ENCODE measurements at regions of chr13 and their contacts with region 1.

Region 1: GRCh38 chr13:109156181-109156935 is 526.9 kb downstream of the MYO16 start:
- DNase-seq: peak; percentile 48 to 98
- H3K4me3 ChIP-seq: peak overlapping the region; percentile 48
- H3K27ac ChIP-seq: peak overlapping the region; percentile 96
- H3K4me1 ChIP-seq: peaks cover 69% of the 10 kb centered on the region
- H3K27me3 ChIP-seq: no peaks in the 10 kb centered on the region
- CTCF ChIP-seq: no peak

Region 2: GRCh38 chr13:109145631-109146030 is 10.7 kb before region 1 on chr13:
- CTCF ChIA-PET with region 1: interaction called, 4 read pairs
- POLR2A ChIA-PET with region 1: interaction called, 6 read pairs
- intact Hi-C with region 1: loop called (anchors 1 kb)
- DNase-seq: peak; percentile 37 to 64
- H3K4me3 ChIP-seq: no peak overlapping the region
- H3K27ac ChIP-seq: no peak overlapping the region
- H3K4me1 ChIP-seq: peaks cover 8% of the 10 kb centered on the region; the same call in 1 of the 2 replicates
- H3K27me3 ChIP-seq: no peaks in the 10 kb centered on the region
- CTCF ChIP-seq: peak; percentile 87

Region 3: DNA sequence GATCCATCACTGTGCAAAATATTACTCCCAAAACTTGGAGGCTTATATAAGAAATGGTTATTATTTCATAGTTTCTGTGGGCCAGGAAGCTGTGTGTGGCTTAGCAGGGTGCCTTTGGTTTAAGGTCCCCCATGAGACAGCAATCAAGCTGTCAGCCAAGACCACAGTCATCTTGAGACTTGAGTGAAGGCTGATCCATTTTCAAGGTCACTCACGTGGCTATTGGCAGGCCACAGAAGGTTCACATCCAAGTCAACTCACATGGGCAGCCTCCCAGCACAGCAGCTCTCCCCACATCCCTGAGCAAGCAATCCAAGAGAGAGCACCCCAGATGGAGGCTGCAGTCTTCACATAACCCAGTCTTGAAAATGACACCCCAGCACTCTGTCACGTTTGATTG is 10.4 kb after region 1 on chr13:
- CTCF ChIA-PET with region 1: no interaction called
- POLR2A ChIA-PET with region 1: no interaction called
- intact Hi-C with region 1: no loop called
- DNase-seq: no peak
- H3K4me3 ChIP-seq: no peak overlapping the region
- H3K27ac ChIP-seq: no peak overlapping the region
- H3K4me1 ChIP-seq: peaks cover 11% of the 10 kb centered on the region
- H3K27me3 ChIP-seq: no peaks in the 10 kb centered on the region
- CTCF ChIP-seq: no peak

Region 4: DNA sequence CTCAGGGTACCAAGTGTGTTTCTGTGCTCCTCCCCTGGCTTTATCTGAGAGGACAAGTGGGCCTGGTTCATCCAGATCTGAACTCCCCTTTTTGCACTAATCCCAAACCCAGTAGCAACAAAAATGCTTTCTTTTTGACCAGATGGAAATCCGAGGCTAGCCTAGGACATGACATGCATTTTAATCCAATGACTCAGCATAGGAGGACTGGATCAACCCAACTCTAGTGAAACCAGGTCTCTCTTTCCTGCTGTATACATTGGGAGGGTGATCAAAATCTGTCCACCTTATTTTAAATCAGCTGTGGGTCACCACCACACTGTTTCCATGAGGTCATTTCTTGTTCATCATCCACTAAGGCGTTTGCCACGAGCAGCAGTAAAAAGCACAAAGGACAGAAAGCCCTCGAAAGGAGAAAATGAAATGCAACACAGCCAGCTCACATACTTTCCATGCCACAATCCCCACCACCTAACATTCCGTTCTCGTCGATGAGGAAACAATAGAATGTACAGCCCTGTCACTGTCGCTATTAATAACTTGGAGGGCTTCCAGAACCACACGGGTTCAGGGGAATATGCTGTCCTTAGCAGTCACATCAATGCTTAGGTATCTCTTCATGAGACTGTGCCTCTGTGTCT is 87.1 kb after region 1 on chr13:
- CTCF ChIA-PET with region 1: no interaction called
- POLR2A ChIA-PET with region 1: no interaction called
- intact Hi-C with region 1: loop called (anchors 2 kb)
- DNase-seq: peak; percentile 75 to 96
- H3K4me3 ChIP-seq: peak overlapping the region; percentile 22; the same call in 1 of the 2 replicates
- H3K27ac ChIP-seq: peak overlapping the region; percentile 92
- H3K4me1 ChIP-seq: peaks cover 39% of the 10 kb centered on the region
- H3K27me3 ChIP-seq: no peaks in the 10 kb centered on the region
- CTCF ChIP-seq: no peak

Region 5: GRCh38 chr13:109297628-109298027 is 141.3 kb after region 1 on chr13:
- CTCF ChIA-PET with region 1: no interaction called
- POLR2A ChIA-PET with region 1: no interaction called
- intact Hi-C with region 1: no loop called
- DNase-seq: no peak
- H3K4me3 ChIP-seq: no peak overlapping the region
- H3K27ac ChIP-seq: no peak overlapping the region
- H3K4me1 ChIP-seq: no peaks in the 10 kb centered on the region
- H3K27me3 ChIP-seq: no peaks in the 10 kb centered on the region
- CTCF ChIP-seq: no peak

Region 6: GRCh38 chr13:109331898-109332297 is 175.5 kb after region 1 on chr13:
- CTCF ChIA-PET with region 1: no interaction called
- POLR2A ChIA-PET with region 1: no interaction called
- intact Hi-C with region 1: no loop called
- DNase-seq: peak in 1 of 2 experiments; percentile 49
- H3K4me3 ChIP-seq: no peak overlapping the region
- H3K27ac ChIP-seq: no peak overlapping the region
- H3K4me1 ChIP-seq: peaks cover 23% of the 10 kb centered on the region
- H3K27me3 ChIP-seq: no peaks in the 10 kb centered on the region
- CTCF ChIP-seq: no peak

Region 7: GRCh38 chr13:109684824-109685202 is 528.5 kb after region 1 on chr13:
- CTCF ChIA-PET with region 1: no interaction called
- POLR2A ChIA-PET with region 1: no interaction called
- intact Hi-C with region 1: loop called (anchors 2 kb)
- DNase-seq: peak; percentile 75 to 96
- H3K4me3 ChIP-seq: peak overlapping the region; percentile 52
- H3K27ac ChIP-seq: peak overlapping the region; percentile 95
- H3K4me1 ChIP-seq: peaks cover 50% of the 10 kb centered on the region
- H3K27me3 ChIP-seq: no peaks in the 10 kb centered on the region
- CTCF ChIP-seq: no peak

Region 8: GRCh38 chr13:109955598-109955997 is 799.2 kb after region 1 on chr13:
- CTCF ChIA-PET with region 1: no interaction called
- POLR2A ChIA-PET with region 1: no interaction called
- intact Hi-C with region 1: no loop called
- DNase-seq: no peak
- H3K4me3 ChIP-seq: no peak overlapping the region
- H3K27ac ChIP-seq: no peak overlapping the region
- H3K4me1 ChIP-seq: no peaks in the 10 kb centered on the region
- H3K27me3 ChIP-seq: no peaks in the 10 kb centered on the region
- CTCF ChIP-seq: no peak

Region 9: GRCh38 chr13:110012102-110012739 is 855.9 kb after region 1 on chr13:
- CTCF ChIA-PET with region 1: no interaction called
- POLR2A ChIA-PET with region 1: interaction called, 10 read pairs
- intact Hi-C with region 1: loop called (anchors 5 kb)
- DNase-seq: peak; percentile 77 to 99
- H3K4me3 ChIP-seq: 0 out of 2 replicates have a peak overlapping the region, but pooled peaks have one; percentile 4
- H3K27ac ChIP-seq: peak overlapping the region; percentile 91
- H3K4me1 ChIP-seq: peaks cover 49% of the 10 kb centered on the region
- H3K27me3 ChIP-seq: no peaks in the 10 kb centered on the region
- CTCF ChIP-seq: no peak

Measured in PC-9 (cell line).